CD4-positive, alpha-beta memory T cell (primary cell): ENCODE measurements at regions of chr15 and their contacts with region 1.

Region 1: DNA sequence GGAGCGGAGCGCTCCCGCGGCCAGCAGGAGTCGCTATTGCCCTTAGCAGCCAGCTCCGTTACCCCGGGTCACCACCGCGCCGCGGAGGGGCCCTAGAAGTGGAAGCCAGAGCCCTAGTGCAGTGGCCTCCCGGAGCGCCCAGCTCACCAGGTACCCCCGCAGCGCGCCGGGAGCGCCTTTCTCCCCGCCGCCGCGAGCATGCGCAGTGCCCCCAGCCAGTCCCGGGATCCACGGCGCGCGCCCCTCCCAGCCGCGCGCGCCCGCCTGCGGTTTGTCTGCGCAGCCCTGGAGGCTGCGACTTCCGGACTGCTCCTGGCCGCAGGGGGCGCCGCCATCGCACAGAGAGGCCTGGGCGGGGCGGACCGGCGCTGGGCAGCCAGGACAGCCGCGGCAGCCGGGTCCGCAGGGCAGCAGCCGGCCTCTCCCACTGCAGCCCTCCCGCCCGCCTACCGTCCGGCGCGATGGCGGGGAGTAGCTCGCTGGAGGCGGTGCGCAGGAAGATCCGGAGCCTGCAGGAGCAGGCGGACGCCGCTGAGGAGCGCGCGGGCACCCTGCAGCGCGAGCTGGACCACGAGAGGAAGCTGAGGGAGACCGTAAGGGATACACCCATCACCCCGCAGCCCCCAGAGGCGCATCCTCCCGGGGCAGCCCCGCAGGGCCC is 5.7 kb downstream of the TPM1 start:
- DNase-seq: peak; percentile 83 to 85 (median 85)
- H3K4me3 ChIP-seq: peak overlapping the region; percentile 50 to 72
- H3K4me3 Mint-ChIP-seq: peak overlapping the region; percentile 76 to 96 (median 88)
- H3K27ac ChIP-seq: peak overlapping the region; percentile 24
- H3K27ac Mint-ChIP-seq: peak overlapping the region; percentile 42 to 92 (median 68)
- H3K4me1 ChIP-seq: peaks cover 28% of the 10 kb centered on the region
- H3K4me1 Mint-ChIP-seq: peaks cover 9 to 36% (median 23%) of the 10 kb centered on the region in 4 donors
- H3K27me3 ChIP-seq: peaks cover 23% of the 10 kb centered on the region
- H3K27me3 Mint-ChIP-seq: peaks cover 23 to 32% of the 10 kb centered on the region in 2 donors

Region 2: DNA sequence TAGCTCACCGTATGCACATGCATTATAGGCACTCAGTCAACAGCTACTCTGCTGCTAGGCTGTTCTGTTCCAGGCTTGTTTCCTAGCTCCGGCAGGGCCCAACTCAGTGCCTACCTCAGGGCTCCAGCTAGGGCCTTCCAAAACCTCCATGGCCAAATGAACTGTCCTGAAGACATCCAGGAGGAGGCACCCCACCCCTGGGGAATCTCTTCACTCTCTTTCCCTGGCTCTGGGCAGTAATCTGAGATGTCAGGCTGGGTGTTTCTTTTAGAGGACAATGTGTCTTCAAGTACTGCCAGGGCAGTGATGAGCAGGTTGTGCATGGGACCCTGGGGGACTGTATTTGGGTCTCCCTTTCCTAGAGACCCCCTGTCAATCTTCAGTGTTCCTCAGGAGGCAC is 44.0 kb before region 1 on chr15:
- CTCF ChIA-PET with region 1: no interaction called
- POLR2A ChIA-PET with region 1: no interaction called
- intact Hi-C with region 1: no loop called
- DNase-seq: no peak
- H3K4me3 ChIP-seq: no peak overlapping the region
- H3K4me3 Mint-ChIP-seq: no peak overlapping the region
- H3K27ac ChIP-seq: no peak overlapping the region
- H3K27ac Mint-ChIP-seq: no peak overlapping the region
- H3K4me1 ChIP-seq: no peaks in the 10 kb centered on the region
- H3K4me1 Mint-ChIP-seq: no peaks in the 10 kb centered on the region
- H3K27me3 ChIP-seq: no peaks in the 10 kb centered on the region
- H3K27me3 Mint-ChIP-seq: peaks cover 3 to 8% of the 10 kb centered on the region in 2 donors

Region 3: GRCh38 chr15:63065262-63066221 is 17.3 kb after region 1 on chr15:
- CTCF ChIA-PET with region 1: interaction called, 34 read pairs
- POLR2A ChIA-PET with region 1: no interaction called
- intact Hi-C with region 1: no loop called
- DNase-seq: no peak
- H3K4me3 ChIP-seq: no peak overlapping the region
- H3K4me3 Mint-ChIP-seq: no peak overlapping the region
- H3K27ac ChIP-seq: no peak overlapping the region
- H3K27ac Mint-ChIP-seq: peak overlapping the region in 3 of 7 donors; percentile 6 to 74 (median 33)
- H3K4me1 ChIP-seq: no peaks in the 10 kb centered on the region
- H3K4me1 Mint-ChIP-seq: no peaks in the 10 kb centered on the region
- H3K27me3 ChIP-seq: no peaks in the 10 kb centered on the region
- H3K27me3 Mint-ChIP-seq: no peaks in the 10 kb centered on the region

Region 4: GRCh38 chr15:63086271-63086670 is 38.0 kb after region 1 on chr15:
- CTCF ChIA-PET with region 1: interaction called, 118 read pairs
- POLR2A ChIA-PET with region 1: interaction called, 5 read pairs
- intact Hi-C with region 1: no loop called
- DNase-seq: no peak
- H3K4me3 ChIP-seq: no peak overlapping the region
- H3K4me3 Mint-ChIP-seq: no peak overlapping the region
- H3K27ac ChIP-seq: no peak overlapping the region
- H3K27ac Mint-ChIP-seq: no peak overlapping the region
- H3K4me1 ChIP-seq: no peaks in the 10 kb centered on the region
- H3K4me1 Mint-ChIP-seq: no peaks in the 10 kb centered on the region
- H3K27me3 ChIP-seq: no peaks in the 10 kb centered on the region
- H3K27me3 Mint-ChIP-seq: peaks cover 0 to 5% of the 10 kb centered on the region in 2 donors

Region 5: GRCh38 chr15:63135804-63136203 is 87.6 kb after region 1 on chr15:
- CTCF ChIA-PET with region 1: no interaction called
- POLR2A ChIA-PET with region 1: no interaction called
- intact Hi-C with region 1: no loop called
- DNase-seq: no peak
- H3K4me3 ChIP-seq: no peak overlapping the region
- H3K4me3 Mint-ChIP-seq: no peak overlapping the region
- H3K27ac ChIP-seq: no peak overlapping the region
- H3K27ac Mint-ChIP-seq: peak overlapping the region in 1 of 7 donors; percentile 6
- H3K4me1 ChIP-seq: no peaks in the 10 kb centered on the region
- H3K4me1 Mint-ChIP-seq: no peaks in the 10 kb centered on the region
- H3K27me3 ChIP-seq: no peaks in the 10 kb centered on the region
- H3K27me3 Mint-ChIP-seq: no peaks in the 10 kb centered on the region

Region 6: GRCh38 chr15:63157118-63157843 is 109.0 kb after region 1 on chr15 and contains the start of gene RPS27L:
- CTCF ChIA-PET with region 1: no interaction called
- POLR2A ChIA-PET with region 1: interaction called, 13 read pairs
- intact Hi-C with region 1: no loop called
- DNase-seq: peak; percentile 85 to 94 (median 87)
- H3K4me3 ChIP-seq: peak within 1 kb of the TSS; percentile 53 to 88
- H3K4me3 Mint-ChIP-seq: peak within 1 kb of the TSS; percentile 97 to 100 (median 100)
- H3K27ac ChIP-seq: peak within 1 kb of the TSS; percentile 74
- H3K27ac Mint-ChIP-seq: peak within 1 kb of the TSS; percentile 89 to 99 (median 98)
- H3K4me1 ChIP-seq: peaks cover 29% of the 10 kb centered on the region
- H3K4me1 Mint-ChIP-seq: peaks cover 14 to 32% (median 24%) of the 10 kb centered on the region in 4 donors
- H3K27me3 ChIP-seq: no peaks in the 10 kb centered on the region
- H3K27me3 Mint-ChIP-seq: no peaks in the 10 kb centered on the region
- total RNA-seq, gene RPS27L: 150 to 161 TPM

Region 7: GRCh38 chr15:63402498-63403253 is 354.4 kb after region 1 on chr15:
- CTCF ChIA-PET with region 1: interaction called, 28 read pairs
- POLR2A ChIA-PET with region 1: interaction called, 7 read pairs
- intact Hi-C with region 1: loop called (anchors 1 kb)
- DNase-seq: peak in 4 of 5 donors; percentile 34 to 44 (median 40)
- H3K4me3 ChIP-seq: no peak overlapping the region
- H3K4me3 Mint-ChIP-seq: no peak overlapping the region
- H3K27ac ChIP-seq: no peak overlapping the region
- H3K27ac Mint-ChIP-seq: no peak overlapping the region
- H3K4me1 ChIP-seq: no peaks in the 10 kb centered on the region
- H3K4me1 Mint-ChIP-seq: peaks cover 0 to 4% (median 2%) of the 10 kb centered on the region in 4 donors
- H3K27me3 ChIP-seq: no peaks in the 10 kb centered on the region
- H3K27me3 Mint-ChIP-seq: peaks cover 3 to 8% of the 10 kb centered on the region in 2 donors